ENCODE measurements at regions of chr11 and their contacts with region 1.

Region 1: DNA sequence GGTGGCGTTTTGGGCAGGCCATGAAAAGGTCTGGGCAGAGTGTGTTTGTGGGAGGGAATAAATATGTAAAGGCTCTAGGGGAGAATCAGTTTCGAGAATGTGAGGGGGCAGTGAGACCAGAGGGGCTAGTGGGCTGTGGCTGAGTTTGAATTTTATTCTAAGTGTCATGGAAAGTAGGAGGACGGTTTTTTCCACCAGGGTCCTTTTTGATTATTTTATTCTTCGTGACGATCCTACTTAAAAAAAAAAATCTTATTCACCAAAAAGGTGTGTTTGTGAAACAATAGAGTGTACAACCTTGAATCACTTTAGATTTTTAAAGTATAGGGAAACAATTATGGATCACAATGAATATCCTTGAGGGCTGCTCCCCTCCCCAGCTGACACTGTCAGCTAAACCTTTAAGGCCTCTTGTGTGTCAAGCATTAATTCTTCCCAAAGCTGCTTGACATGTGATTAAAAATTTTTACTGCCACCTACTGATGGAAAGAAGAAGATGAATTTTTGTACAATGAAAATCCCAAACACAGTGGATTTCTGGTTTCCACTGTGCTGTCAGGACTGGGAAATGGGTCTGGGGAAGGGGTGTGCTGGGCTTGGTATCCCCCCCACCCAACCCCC is 107.5 kb upstream of the OR4B1 start:
- DNase-seq: no peak
- H3K4me3 ChIP-seq: peak overlapping the region; percentile 48
- H3K27ac ChIP-seq: peak overlapping the region; percentile 7
- H3K4me1 ChIP-seq: peaks cover 24% of the 10 kb centered on the region
- H3K27me3 ChIP-seq: no peaks in the 10 kb centered on the region
- CTCF ChIP-seq: peak; percentile 41

Region 2: DNA sequence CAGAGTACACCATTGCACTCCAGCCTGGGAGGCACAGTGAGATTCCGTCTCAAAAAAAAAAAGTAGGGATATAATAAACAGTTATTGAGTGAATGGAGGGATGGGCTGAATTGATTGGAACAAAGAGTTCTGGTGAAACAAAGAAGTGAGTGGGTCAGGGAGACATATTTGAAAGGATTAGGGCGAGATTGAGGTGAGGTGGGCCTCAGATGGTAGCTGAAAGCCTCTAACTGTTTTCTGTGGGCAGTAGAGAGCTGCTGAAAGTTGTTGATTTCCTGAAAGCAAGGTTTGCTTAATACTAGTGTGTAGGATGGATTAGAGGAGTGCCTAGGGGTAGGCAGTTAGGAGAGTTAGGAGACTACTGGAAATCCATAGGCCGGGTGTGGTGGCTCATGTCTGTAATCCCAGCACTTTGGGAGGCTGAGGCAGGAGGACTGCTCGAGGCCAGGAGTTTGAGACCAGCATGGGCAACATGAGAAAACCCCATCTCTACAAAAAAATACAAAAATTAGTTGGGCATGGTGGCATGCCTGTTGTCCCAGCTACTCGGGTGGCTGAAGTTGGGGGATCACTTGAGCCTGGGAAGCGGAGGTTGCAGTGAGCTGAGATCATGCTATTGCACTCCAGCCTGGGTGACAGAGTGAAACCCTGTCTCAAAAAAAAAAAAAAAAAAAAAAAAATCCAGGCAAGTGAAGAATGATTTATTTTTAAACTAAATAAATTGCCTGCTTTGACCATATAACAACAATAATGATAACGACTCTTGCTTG is 170.2 kb before region 1 on chr11:
- intact Hi-C with region 1: loop called (anchors 5 kb)
- DNase-seq: no peak
- H3K4me3 ChIP-seq: no peak overlapping the region
- H3K27ac ChIP-seq: no peak overlapping the region
- H3K4me1 ChIP-seq: no peaks in the 10 kb centered on the region
- H3K27me3 ChIP-seq: no peaks in the 10 kb centered on the region
- CTCF ChIP-seq: no peak